AG04450 (cell line): ENCODE measurements at regions of chr11 and their contacts with region 1.

Region 1: GRCh38 chr11:126989942-126990715 is 10.4 kb downstream of the KIRREL3 start:
- DNase-seq: peak; percentile 46
- H3K4me3 ChIP-seq: peak overlapping the region; percentile 49
- H3K27ac ChIP-seq: peak overlapping the region; percentile 86
- H3K27me3 ChIP-seq: no peaks in the 10 kb centered on the region
- CTCF ChIP-seq: peak; percentile 98

Region 2: GRCh38 chr11:126646701-126647557 is 343.2 kb before region 1 on chr11:
- CTCF ChIA-PET with region 1: interaction called, 10 read pairs
- POLR2A ChIA-PET with region 1: no interaction called
- DNase-seq: no peak
- H3K4me3 ChIP-seq: no peak overlapping the region
- H3K27ac ChIP-seq: peak overlapping the region; percentile 83
- H3K27me3 ChIP-seq: no peaks in the 10 kb centered on the region
- CTCF ChIP-seq: no peak

Region 3: GRCh38 chr11:126732981-126733380 is 257.1 kb before region 1 on chr11:
- CTCF ChIA-PET with region 1: interaction called, 16 read pairs
- POLR2A ChIA-PET with region 1: no interaction called
- DNase-seq: no peak
- H3K4me3 ChIP-seq: no peak overlapping the region
- H3K27ac ChIP-seq: no peak overlapping the region
- H3K27me3 ChIP-seq: no peaks in the 10 kb centered on the region
- CTCF ChIP-seq: no peak

Region 4: DNA sequence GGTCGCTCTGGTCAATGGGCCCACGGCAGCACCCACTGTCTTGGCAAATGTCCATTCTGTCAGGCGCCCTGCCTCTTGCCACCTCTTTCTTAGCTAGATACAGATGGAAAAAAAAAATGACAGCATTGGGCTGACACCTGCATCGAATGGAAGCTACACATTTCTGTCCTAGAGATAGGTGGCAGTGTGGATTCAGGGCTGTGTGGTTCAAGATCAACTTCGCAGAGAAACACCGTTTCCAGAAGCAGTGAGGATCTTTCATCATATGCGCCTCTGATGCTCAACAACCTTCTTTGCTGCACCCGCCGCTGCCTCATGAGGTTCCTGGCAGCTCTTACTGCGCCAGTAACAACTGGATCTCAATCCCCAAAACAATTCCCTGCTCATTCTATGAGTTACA is 225.9 kb before region 1 on chr11:
- CTCF ChIA-PET with region 1: interaction called, 13 read pairs
- POLR2A ChIA-PET with region 1: no interaction called
- DNase-seq: no peak
- H3K4me3 ChIP-seq: no peak overlapping the region
- H3K27ac ChIP-seq: no peak overlapping the region
- H3K27me3 ChIP-seq: no peaks in the 10 kb centered on the region
- CTCF ChIP-seq: peak; percentile 38

Region 5: GRCh38 chr11:126978911-126979310 is 11.2 kb before region 1 on chr11:
- CTCF ChIA-PET with region 1: interaction called, 15 read pairs
- POLR2A ChIA-PET with region 1: no interaction called
- DNase-seq: no peak
- H3K4me3 ChIP-seq: no peak overlapping the region
- H3K27ac ChIP-seq: no peak overlapping the region
- H3K27me3 ChIP-seq: no peaks in the 10 kb centered on the region
- CTCF ChIP-seq: no peak